Caco-2 (cell line): ENCODE measurements at regions of chr3 and their contacts with region 1.

Region 1: DNA sequence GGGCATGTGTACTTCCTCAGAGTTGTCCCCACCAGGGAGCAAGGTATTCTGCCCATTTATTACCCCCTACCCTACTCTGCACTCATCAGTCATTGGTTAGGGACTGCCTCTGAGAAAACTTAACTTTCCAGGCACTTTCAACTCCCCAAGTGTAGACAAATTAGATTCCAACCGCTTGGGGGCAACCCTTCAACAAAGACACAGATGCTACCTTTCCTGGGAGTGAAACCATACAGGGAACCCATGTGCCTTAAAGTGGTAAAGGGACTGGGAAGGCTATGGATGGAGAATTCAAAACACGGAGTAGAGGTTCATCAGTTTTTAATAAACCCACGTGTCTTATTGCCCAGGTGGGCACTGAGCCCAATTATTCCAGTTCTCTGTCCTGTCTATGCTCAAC is 19.4 kb upstream of the UBE2E2 start:
- DNase-seq: peak; percentile 65 to 73
- H3K4me3 ChIP-seq: no peak overlapping the region
- H3K4me3 Mint-ChIP-seq: no peak overlapping the region
- H3K27ac Mint-ChIP-seq: no peak overlapping the region
- H3K4me1 ChIP-seq: peaks cover 5% of the 10 kb centered on the region
- H3K4me1 Mint-ChIP-seq: peaks cover 19% of the 10 kb centered on the region
- H3K27me3 ChIP-seq: no peaks in the 10 kb centered on the region
- H3K27me3 Mint-ChIP-seq: no peaks in the 10 kb centered on the region
- CTCF ChIP-seq: peak; percentile 54 to 75

Region 2: GRCh38 chr3:23356169-23356568 is 172.4 kb after region 1 on chr3:
- CTCF ChIA-PET with region 1: no interaction called
- POLR2A ChIA-PET with region 1: no interaction called
- intact Hi-C with region 1: loop called (anchors 10 kb)
- DNase-seq: no peak
- H3K4me3 ChIP-seq: no peak overlapping the region
- H3K4me3 Mint-ChIP-seq: no peak overlapping the region
- H3K27ac Mint-ChIP-seq: no peak overlapping the region
- H3K4me1 ChIP-seq: no peaks in the 10 kb centered on the region
- H3K4me1 Mint-ChIP-seq: no peaks in the 10 kb centered on the region
- H3K27me3 ChIP-seq: no peaks in the 10 kb centered on the region
- H3K27me3 Mint-ChIP-seq: no peaks in the 10 kb centered on the region
- CTCF ChIP-seq: no peak

Region 3: GRCh38 chr3:23546181-23546580 is 362.4 kb after region 1 on chr3:
- CTCF ChIA-PET with region 1: no interaction called
- POLR2A ChIA-PET with region 1: no interaction called
- intact Hi-C with region 1: loop called (anchors 10 kb)
- DNase-seq: no peak
- H3K4me3 ChIP-seq: no peak overlapping the region
- H3K4me3 Mint-ChIP-seq: no peak overlapping the region
- H3K27ac Mint-ChIP-seq: no peak overlapping the region
- H3K4me1 ChIP-seq: peaks cover 30% of the 10 kb centered on the region
- H3K4me1 Mint-ChIP-seq: peaks cover 32% of the 10 kb centered on the region
- H3K27me3 ChIP-seq: no peaks in the 10 kb centered on the region
- H3K27me3 Mint-ChIP-seq: no peaks in the 10 kb centered on the region
- CTCF ChIP-seq: no peak

Region 4: GRCh38 chr3:23761440-23761896 is 577.7 kb after region 1 on chr3:
- CTCF ChIA-PET with region 1: no interaction called
- POLR2A ChIA-PET with region 1: no interaction called
- intact Hi-C with region 1: loop called (anchors 1 kb)
- DNase-seq: peak; percentile 56 to 63
- H3K4me3 ChIP-seq: no peak overlapping the region
- H3K4me3 Mint-ChIP-seq: no peak overlapping the region
- H3K27ac Mint-ChIP-seq: no peak overlapping the region
- H3K4me1 ChIP-seq: no peaks in the 10 kb centered on the region
- H3K4me1 Mint-ChIP-seq: no peaks in the 10 kb centered on the region
- H3K27me3 ChIP-seq: no peaks in the 10 kb centered on the region
- H3K27me3 Mint-ChIP-seq: no peaks in the 10 kb centered on the region
- CTCF ChIP-seq: peak in 1 of 2 experiments; percentile 55